ENCODE measurements at regions of chr1 and their contacts with region 1.

Region 1: GRCh38 chr1:45913183-45913683 is 109.8 kb downstream of the MAST2 start:
- DNase-seq: peak; percentile 88 to 93
- ATAC-seq: peak; percentile 90 to 93
- H3K4me3 ChIP-seq: peak overlapping the region; percentile 55 to 64 (median 58)
- H3K27ac ChIP-seq: peak overlapping the region; percentile 91 to 97 (median 92)
- H3K4me1 ChIP-seq: peaks cover 36 to 39% of the 10 kb centered on the region in 2 donors
- H3K27me3 ChIP-seq: no peaks in the 10 kb centered on the region
- CTCF ChIP-seq: no peak
- POLR2A ChIP-seq: peak; percentile 84 to 89

Region 2: GRCh38 chr1:46021046-46021996 is 108.1 kb after region 1 on chr1:
- in situ Hi-C with region 1: no loop called
- intact Hi-C with region 1: loop called (anchors 5 kb)
- DNase-seq: no peak
- ATAC-seq: no peak
- H3K4me3 ChIP-seq: no peak overlapping the region
- H3K27ac ChIP-seq: peak overlapping the region; percentile 17 to 57 (median 42)
- H3K4me1 ChIP-seq: peaks cover 22 to 49% of the 10 kb centered on the region in 2 donors
- H3K27me3 ChIP-seq: no peaks in the 10 kb centered on the region
- CTCF ChIP-seq: peak in 2 of 5 experiments; percentile 16 to 27
- POLR2A ChIP-seq: no peak

Region 3: DNA sequence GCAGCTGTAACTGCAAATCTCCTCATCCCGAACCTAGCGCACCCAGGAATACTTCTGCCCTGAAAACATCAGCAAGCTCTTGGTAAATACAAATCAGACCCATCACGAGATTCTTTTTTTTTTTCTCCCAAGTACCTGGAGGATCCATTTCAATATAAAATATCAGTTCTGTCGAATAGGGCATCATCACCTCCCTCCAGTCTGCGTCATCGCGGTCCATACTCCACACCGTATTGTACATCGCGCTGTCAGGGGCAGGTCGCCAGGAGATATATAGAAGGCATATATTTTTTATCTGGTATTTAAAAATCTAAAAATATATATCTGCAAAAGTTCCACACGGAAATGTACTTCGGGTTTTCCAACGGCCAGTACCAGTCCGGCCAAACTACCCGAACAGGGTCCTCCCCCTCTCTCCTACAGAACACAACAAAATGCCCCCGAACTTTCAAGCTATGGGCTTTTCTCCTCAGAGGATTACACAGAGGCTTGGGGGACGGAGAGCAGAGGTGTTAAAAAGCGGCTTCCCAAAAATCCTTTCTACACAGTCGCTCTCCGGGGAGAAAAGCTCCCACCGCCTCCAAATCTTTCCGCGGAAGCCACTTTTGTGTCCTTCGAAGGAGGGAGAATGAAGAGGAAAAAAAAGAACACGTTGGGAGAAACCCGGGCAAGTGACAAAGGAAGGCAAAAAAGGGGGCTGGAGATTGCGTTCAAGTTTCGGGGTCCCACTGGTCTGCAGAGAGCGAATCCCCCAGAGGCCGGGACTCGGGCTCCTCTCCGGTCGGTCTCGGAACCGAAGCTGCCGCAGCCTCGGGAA is 218.7 kb after region 1 on chr1:
- in situ Hi-C with region 1: no loop called
- intact Hi-C with region 1: no loop called
- DNase-seq: peak in 1 of 2 donors; percentile 22
- ATAC-seq: peak; percentile 0 to 3
- H3K4me3 ChIP-seq: peak overlapping the region; percentile 76 to 95 (median 84)
- H3K27ac ChIP-seq: peak overlapping the region; percentile 96 to 99 (median 98)
- H3K4me1 ChIP-seq: peaks cover 39 to 48% of the 10 kb centered on the region in 2 donors
- H3K27me3 ChIP-seq: peaks cover 0 to 10% (median 6%) of the 10 kb centered on the region in 3 donors
- CTCF ChIP-seq: no peak
- POLR2A ChIP-seq: no peak

Measured in gastrocnemius medialis (tissue), 4 donors.